ENCODE measurements at regions of chr20 and their contacts with region 1.

Region 1: GRCh38 chr20:7285918-7286556 is 518.6 kb downstream of the BMP2 start:
- DNase-seq: peak; percentile 75 to 77
- H3K4me3 ChIP-seq: no peak overlapping the region
- H3K4me3 Mint-ChIP-seq: no peak overlapping the region
- H3K27ac Mint-ChIP-seq: no peak overlapping the region
- H3K4me1 ChIP-seq: 0 out of 2 replicates have a peak, but pooled peaks cover under 1% of the 10 kb centered on the region
- H3K4me1 Mint-ChIP-seq: no peaks in the 10 kb centered on the region
- H3K27me3 ChIP-seq: no peaks in the 10 kb centered on the region
- H3K27me3 Mint-ChIP-seq: no peaks in the 10 kb centered on the region
- CTCF ChIP-seq: peak; percentile 78 to 94

Region 2: DNA sequence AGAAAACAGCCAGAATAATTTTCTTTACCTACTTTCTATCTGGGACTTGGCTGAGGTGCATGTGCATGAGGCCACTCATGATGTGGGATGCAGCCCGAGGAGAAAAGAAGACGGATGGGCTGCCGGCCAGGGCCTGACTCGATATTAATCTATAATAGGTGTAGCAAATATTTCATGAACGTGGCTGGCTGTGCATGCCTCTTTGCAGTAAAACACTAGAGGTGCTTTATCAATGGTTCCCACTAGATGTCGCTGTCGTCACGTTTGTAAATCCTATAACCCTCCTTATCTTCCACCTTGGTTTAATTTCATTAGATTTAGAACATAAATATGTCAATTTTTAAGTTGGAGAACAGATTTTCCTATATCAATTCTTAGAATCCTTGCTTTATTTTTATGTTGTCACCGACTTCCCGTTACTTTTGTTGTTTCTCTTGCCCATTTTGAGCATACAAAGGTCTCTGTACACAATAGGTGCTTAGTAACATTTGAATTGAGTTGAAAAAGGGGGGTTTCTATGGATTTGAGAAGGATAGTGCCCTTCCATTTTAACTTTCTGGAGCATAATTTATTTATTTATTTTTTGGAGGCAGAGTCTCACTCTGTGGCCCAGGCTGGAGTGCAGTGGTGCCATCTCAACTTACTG is 1143.6 kb before region 1 on chr20:
- CTCF ChIA-PET with region 1: no interaction called
- POLR2A ChIA-PET with region 1: no interaction called
- intact Hi-C with region 1: loop called (anchors 1 kb)
- DNase-seq: peak; percentile 54 to 67
- H3K4me3 ChIP-seq: no peak overlapping the region
- H3K4me3 Mint-ChIP-seq: no peak overlapping the region
- H3K27ac Mint-ChIP-seq: no peak overlapping the region
- H3K4me1 ChIP-seq: no peaks in the 10 kb centered on the region
- H3K4me1 Mint-ChIP-seq: no peaks in the 10 kb centered on the region
- H3K27me3 ChIP-seq: no peaks in the 10 kb centered on the region; the same call in 1 of the 2 replicates
- H3K27me3 Mint-ChIP-seq: peaks cover under 1% of the 10 kb centered on the region
- CTCF ChIP-seq: peak; percentile 71 to 84

Region 3: DNA sequence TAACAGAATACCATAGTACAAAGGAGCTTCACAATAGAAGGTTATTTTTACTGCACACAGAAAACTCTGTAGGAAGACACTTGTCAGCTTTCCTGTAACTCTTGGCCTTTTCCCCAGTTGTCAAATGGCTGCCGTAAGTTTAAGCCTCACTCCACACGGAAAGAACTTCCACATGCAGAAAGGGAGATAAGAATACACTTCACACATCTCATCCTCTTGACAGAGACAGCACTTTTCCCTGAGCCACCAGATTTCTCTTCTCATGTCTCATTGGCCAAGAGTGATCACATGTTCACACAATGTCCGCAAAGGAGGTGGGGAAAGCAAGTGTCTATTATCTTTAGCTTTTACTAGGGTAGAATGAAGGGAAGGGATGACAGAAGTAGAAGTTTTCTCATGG is 113.5 kb after region 1 on chr20:
- CTCF ChIA-PET with region 1: no interaction called
- POLR2A ChIA-PET with region 1: no interaction called
- intact Hi-C with region 1: no loop called
- DNase-seq: no peak
- H3K4me3 ChIP-seq: no peak overlapping the region
- H3K4me3 Mint-ChIP-seq: peak overlapping the region; percentile 10
- H3K27ac Mint-ChIP-seq: no peak overlapping the region
- H3K4me1 ChIP-seq: no peaks in the 10 kb centered on the region
- H3K4me1 Mint-ChIP-seq: peaks cover 7% of the 10 kb centered on the region
- H3K27me3 ChIP-seq: no peaks in the 10 kb centered on the region; the same call in 1 of the 2 replicates
- H3K27me3 Mint-ChIP-seq: peaks cover 3% of the 10 kb centered on the region
- CTCF ChIP-seq: no peak

Region 4: GRCh38 chr20:7665376-7665775 is 379.3 kb after region 1 on chr20:
- CTCF ChIA-PET with region 1: no interaction called
- POLR2A ChIA-PET with region 1: no interaction called
- intact Hi-C with region 1: no loop called
- DNase-seq: no peak
- H3K4me3 ChIP-seq: no peak overlapping the region
- H3K4me3 Mint-ChIP-seq: no peak overlapping the region
- H3K27ac Mint-ChIP-seq: no peak overlapping the region
- H3K4me1 ChIP-seq: no peaks in the 10 kb centered on the region
- H3K4me1 Mint-ChIP-seq: no peaks in the 10 kb centered on the region
- H3K27me3 ChIP-seq: no peaks in the 10 kb centered on the region
- H3K27me3 Mint-ChIP-seq: peaks cover 2% of the 10 kb centered on the region
- CTCF ChIP-seq: no peak

Measured in Caco-2 (cell line).